Activated T-helper 1 cell treated with anti-CD3 and anti-CD28 coated beads, Interleukin-12 subunit alpha, Interleukin-12 subunit beta, Interleukin-2, Interleukin-4 antibody, amounts not matched to agents 30 ng/mL and 10 ng/mL and 1 ng/mL, durations not matched to agents 14 hours and 24 hours and 36 hours (primary cell): ENCODE measurements at regions of chr2 and their contacts with region 1.

Region 1: DNA sequence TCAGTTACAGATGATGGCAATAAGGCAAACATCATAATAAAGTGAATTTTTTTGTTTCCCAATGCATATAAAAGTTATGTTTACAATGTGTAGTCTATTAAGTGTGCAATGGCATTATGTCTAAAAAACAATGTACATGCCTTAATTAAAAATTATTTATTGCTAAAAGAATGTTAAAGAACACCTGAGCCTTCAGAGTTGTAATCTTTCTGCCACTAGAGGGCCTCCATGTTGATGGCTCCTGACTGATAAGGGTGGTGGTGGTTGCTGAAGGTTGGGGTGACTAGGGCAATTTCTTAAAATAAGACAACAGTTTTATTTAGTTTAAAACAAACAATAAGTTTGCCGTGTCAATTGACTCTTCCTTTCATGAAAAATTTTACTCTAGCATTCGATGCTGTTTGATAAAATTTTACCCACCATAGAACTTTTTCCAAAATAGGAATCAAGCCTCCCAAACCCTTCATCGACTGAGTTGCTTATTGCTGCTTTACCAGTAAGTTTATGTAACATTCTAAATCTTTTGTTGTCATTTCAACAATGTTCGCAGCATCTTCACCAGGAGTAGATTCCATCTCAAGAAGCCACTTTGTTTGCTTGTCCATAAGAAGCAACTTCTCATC is 32.3 kb downstream of the MAP3K2 start:
- DNase-seq: peak; percentile 22
- H3K4me3 Mint-ChIP-seq: no peak overlapping the region
- H3K27ac Mint-ChIP-seq: no peak overlapping the region
- H3K4me1 Mint-ChIP-seq: peaks cover 21% of the 10 kb centered on the region
- H3K27me3 Mint-ChIP-seq: no peaks in the 10 kb centered on the region

Region 2: GRCh38 chr2:127408004-127408806 is 52.7 kb after region 1 on chr2:
- intact Hi-C with region 1: loop called (anchors 1 kb)
- DNase-seq: peak; percentile 80
- H3K4me3 Mint-ChIP-seq: peak overlapping the region; percentile 53
- H3K27ac Mint-ChIP-seq: peak overlapping the region; percentile 71
- H3K4me1 Mint-ChIP-seq: peaks cover 28% of the 10 kb centered on the region
- H3K27me3 Mint-ChIP-seq: peaks cover 15% of the 10 kb centered on the region

Region 3: GRCh38 chr2:127415593-127416505 is 60.4 kb after region 1 on chr2:
- intact Hi-C with region 1: loop called (anchors 1 kb)
- DNase-seq: peak; percentile 67
- H3K4me3 Mint-ChIP-seq: peak overlapping the region; percentile 71
- H3K27ac Mint-ChIP-seq: peak overlapping the region; percentile 29
- H3K4me1 Mint-ChIP-seq: peaks cover 51% of the 10 kb centered on the region
- H3K27me3 Mint-ChIP-seq: peaks cover 14% of the 10 kb centered on the region

Region 4: GRCh38 chr2:127453392-127454171 is 98.1 kb after region 1 on chr2:
- intact Hi-C with region 1: loop called (anchors 1 kb)
- DNase-seq: no peak
- H3K4me3 Mint-ChIP-seq: no peak overlapping the region
- H3K27ac Mint-ChIP-seq: no peak overlapping the region
- H3K4me1 Mint-ChIP-seq: no peaks in the 10 kb centered on the region
- H3K27me3 Mint-ChIP-seq: peaks cover 3% of the 10 kb centered on the region